Activated CD4-positive, alpha-beta T cell treated with anti-CD3 and anti-CD28 coated beads for 36 hours (primary cell): ENCODE measurements at regions of chr10 and their contacts with region 1.

Region 1: DNA sequence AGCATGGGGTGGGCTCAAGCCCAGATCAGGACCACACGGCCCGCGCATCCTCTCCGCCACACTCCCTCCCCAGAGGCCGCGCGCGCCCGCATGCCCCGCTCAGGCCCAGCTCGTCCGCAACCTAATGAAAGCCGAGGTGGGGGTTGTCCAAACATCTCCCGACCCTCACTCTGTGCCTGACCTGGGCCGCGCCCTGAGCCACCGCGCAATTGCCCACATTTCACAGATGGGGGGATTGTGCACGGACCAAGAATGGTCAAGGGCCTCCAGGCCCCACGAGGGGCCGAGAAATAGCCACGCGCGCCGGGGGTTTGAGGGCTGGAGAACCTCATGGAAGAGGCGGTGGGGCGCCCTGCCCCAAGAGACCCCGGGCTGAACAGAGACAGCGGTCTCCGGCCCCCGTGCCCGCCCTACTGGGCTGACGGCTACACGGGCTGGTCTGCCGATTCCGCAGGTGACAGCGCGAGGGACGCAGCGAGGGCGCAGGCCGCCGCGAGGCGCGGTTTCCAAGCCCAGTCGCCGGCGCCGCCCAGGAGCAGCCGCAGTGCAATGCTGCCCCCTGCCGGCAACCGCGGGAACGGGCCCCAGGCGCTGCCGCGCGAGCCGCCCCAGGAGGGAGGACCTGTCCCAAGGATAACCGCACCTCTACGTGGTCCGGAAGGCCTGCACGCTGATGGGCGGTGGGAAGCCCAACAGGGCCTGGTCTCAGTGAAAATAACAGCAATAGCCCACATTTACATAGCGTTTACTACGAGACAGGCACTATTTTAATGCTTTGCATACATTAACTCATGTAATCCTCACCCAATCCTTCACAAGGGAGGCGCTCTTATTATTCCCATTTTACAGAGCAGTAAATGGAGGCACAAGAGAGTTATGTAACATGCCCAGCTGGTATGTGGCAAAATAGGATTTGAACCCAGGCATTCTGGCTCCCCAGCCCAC is 10.5 kb upstream of the GRID1 start:
- DNase-seq: peak; percentile 89
- ATAC-seq: peak; percentile 97
- H3K4me3 Mint-ChIP-seq: no peak overlapping the region
- H3K27ac Mint-ChIP-seq: no peak overlapping the region
- H3K4me1 Mint-ChIP-seq: no peaks in the 10 kb centered on the region
- H3K27me3 Mint-ChIP-seq: peaks cover 20% of the 10 kb centered on the region

Region 2: DNA sequence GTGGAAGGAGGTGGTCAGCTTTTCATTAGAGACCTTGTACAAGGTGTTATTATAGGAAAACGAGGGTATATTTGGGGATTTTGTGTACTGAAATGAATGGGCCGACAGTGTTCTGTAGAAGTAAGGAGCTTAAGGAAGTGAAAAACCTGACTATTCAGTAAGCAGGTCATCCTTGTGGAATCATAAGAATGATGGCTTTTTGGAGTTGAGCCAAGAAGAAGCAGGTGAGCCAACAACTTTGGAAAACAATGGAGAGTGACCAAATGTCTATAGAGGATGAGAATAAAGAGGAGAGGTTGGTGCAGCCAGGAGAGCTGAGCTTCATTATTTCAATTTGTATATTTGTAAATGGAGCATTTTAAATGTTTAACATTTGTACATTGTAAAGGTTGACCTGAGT is 1453.0 kb before region 1 on chr10:
- CTCF ChIA-PET with region 1: no interaction called
- POLR2A ChIA-PET with region 1: no interaction called
- intact Hi-C with region 1: loop called in 1 of 2 experiments (anchors 2 kb)
- DNase-seq: no peak
- ATAC-seq: no peak
- H3K4me3 Mint-ChIP-seq: no peak overlapping the region
- H3K27ac Mint-ChIP-seq: no peak overlapping the region
- H3K4me1 Mint-ChIP-seq: no peaks in the 10 kb centered on the region
- H3K27me3 Mint-ChIP-seq: peaks cover 4% of the 10 kb centered on the region

Region 3: GRCh38 chr10:85682601-85683000 is 694.5 kb before region 1 on chr10:
- CTCF ChIA-PET with region 1: no interaction called
- POLR2A ChIA-PET with region 1: no interaction called
- intact Hi-C with region 1: no loop called
- DNase-seq: no peak
- ATAC-seq: no peak
- H3K4me3 Mint-ChIP-seq: no peak overlapping the region
- H3K27ac Mint-ChIP-seq: no peak overlapping the region
- H3K4me1 Mint-ChIP-seq: no peaks in the 10 kb centered on the region
- H3K27me3 Mint-ChIP-seq: peaks cover 4% of the 10 kb centered on the region

Region 4: DNA sequence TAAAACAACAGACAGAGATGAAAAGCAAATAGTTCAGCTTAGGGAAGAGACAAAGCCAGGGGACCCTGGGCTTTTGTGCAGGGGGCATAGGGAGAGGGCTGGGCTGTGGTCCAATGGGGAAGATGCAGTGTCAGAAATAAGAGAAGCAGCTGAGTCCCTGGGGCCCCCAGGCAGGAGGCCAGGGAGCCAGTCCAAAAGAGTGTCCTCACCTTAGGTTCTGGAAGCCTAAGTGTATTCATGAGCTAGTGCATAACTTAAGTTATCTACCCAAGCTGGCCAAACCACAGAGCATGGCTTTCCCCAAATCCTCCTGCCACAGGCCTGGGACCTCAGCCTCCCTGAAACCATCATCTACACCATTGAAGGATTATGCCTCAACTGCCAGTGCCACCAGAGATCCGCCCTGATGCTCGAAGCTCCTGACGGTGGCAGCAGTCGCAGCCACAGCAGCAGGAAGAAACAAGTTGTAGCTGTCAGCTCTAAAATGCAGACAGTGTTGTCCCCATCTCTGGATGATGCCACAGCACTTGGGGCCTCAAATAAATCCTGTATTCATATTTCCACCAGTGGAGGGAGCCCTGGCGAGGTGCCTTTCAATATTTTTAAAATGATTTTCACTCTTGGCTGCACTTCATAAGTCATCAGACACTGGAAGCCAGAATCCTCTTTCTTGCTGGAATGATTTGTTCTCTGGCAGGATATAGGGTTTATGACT is 585.1 kb before region 1 on chr10:
- CTCF ChIA-PET with region 1: no interaction called
- POLR2A ChIA-PET with region 1: no interaction called
- intact Hi-C with region 1: loop called in 1 of 2 experiments (anchors 5 kb)
- DNase-seq: no peak
- ATAC-seq: no peak
- H3K4me3 Mint-ChIP-seq: no peak overlapping the region
- H3K27ac Mint-ChIP-seq: no peak overlapping the region
- H3K4me1 Mint-ChIP-seq: peaks cover 5% of the 10 kb centered on the region
- H3K27me3 Mint-ChIP-seq: peaks cover 6% of the 10 kb centered on the region

Region 5: DNA sequence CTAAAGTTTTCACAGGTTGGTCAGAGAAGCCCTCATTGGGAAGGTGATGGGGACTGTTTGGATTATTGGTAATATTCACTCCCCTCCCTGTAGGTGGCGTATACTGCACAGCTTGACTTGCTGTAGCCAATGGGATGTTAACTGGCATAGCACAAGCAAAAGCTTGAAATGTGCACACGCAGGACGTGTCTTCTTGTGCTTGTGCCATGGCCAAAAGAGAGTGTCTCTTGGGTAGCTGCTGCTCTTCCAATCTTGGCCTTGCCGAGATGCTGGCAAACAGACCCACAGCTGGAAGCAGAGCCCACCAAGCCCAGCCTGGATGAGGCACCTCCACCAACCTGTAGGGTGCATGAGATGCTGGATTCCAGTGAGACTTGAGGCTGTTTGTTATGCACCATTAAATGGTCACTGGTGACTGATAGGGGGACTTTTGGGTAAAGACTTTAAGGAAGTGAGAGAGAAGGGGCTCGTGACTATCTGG is 276.5 kb before region 1 on chr10:
- CTCF ChIA-PET with region 1: no interaction called
- POLR2A ChIA-PET with region 1: no interaction called
- intact Hi-C with region 1: loop called in 1 of 2 experiments (anchors 1 kb)
- DNase-seq: peak; percentile 25
- ATAC-seq: peak; percentile 74
- H3K4me3 Mint-ChIP-seq: no peak overlapping the region
- H3K27ac Mint-ChIP-seq: no peak overlapping the region
- H3K4me1 Mint-ChIP-seq: no peaks in the 10 kb centered on the region
- H3K27me3 Mint-ChIP-seq: peaks cover 2% of the 10 kb centered on the region

Region 6: DNA sequence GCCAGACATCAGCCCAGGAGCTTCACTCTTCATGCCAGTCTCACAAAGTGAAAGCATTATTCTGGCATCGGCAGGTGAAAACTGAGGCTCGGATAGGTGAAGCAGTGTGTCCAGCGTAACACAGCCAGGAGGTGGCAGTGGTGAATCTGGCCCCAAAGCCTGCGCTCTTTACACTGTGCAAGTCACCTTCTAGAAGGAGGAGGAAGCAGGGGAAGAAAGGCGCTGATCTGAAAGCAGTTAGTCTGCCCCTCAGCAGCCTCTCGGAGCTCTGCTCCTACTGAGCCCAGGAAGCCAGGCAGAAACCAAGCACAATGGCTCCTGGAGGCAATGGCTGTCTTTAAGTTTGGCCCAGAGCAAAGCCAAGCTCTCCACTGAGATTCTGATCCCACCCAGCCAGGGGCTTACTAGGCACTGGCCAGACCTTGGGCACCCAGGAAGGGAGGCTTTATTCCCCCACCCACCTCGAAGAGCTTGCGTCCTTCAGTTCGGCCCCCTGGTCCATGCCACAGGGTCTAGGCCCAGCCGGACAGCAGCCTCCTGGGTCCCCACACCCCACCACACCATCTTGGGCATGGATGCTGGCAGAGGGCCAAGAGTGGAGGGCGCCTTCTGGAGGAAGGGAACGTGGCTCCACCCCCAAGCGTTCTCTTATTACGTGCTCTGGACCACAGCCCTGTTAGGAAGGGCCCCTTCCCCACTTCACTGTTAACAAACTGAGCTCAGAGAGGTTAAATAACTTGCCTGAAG is 115.0 kb before region 1 on chr10:
- CTCF ChIA-PET with region 1: no interaction called
- POLR2A ChIA-PET with region 1: no interaction called
- intact Hi-C with region 1: loop called (anchors 1 to 5 kb)
- DNase-seq: peak; percentile 43
- ATAC-seq: peak; percentile 72
- H3K4me3 Mint-ChIP-seq: no peak overlapping the region
- H3K27ac Mint-ChIP-seq: no peak overlapping the region
- H3K4me1 Mint-ChIP-seq: no peaks in the 10 kb centered on the region
- H3K27me3 Mint-ChIP-seq: peaks cover 27% of the 10 kb centered on the region